HEK293T (cell line): ENCODE measurements at regions of chr11 and their contacts with region 1.

Region 1: DNA sequence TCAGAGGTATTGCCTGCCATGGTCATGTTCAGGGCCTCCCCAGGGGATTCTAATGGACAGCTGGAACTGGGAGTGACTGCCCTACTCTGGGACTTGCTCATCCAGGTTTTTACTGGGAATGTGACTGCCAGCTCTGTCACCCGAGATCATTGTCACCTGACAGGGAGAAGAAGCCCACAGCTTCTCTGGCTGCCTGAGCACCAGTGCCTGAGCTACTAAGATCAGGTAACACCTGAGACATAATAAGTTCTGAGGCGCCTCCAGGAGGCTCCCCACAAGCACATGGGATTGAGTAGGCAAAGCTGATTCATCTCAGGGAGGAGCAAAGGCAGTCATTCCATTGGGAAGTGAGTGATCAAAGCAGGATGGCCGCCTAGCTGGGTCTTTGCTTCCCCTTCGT is 84.2 kb upstream of the GALNT18 start:
- DNase-seq: peak; percentile 10

Region 2: GRCh38 chr11:11876458-11876857 is 170.4 kb after region 1 on chr11:
- CTCF ChIA-PET with region 1: interaction called, 11 read pairs
- POLR2A ChIA-PET with region 1: no interaction called
- DNase-seq: peak; percentile 27